CD8-positive, alpha-beta T cell (primary cell): ENCODE measurements at regions of chr2 and their contacts with region 1.

Region 1: GRCh38 chr2:63841254-63842022 is at the start of gene UGP2:
- DNase-seq: peak; percentile 68 to 92 (median 83)
- ATAC-seq: peak; percentile 68
- H3K4me3 ChIP-seq: peak within 1 kb of the TSS; percentile 94 to 98
- H3K4me3 Mint-ChIP-seq: peak within 1 kb of the TSS; percentile 99
- H3K27ac ChIP-seq: peak within 1 kb of the TSS; percentile 81 to 89
- H3K27ac Mint-ChIP-seq: peak within 1 kb of the TSS; percentile 98
- H3K4me1 ChIP-seq: peaks cover 41% of the 10 kb centered on the region
- H3K4me1 Mint-ChIP-seq: peaks cover 52% of the 10 kb centered on the region
- H3K27me3 ChIP-seq: no peaks in the 10 kb centered on the region
- H3K27me3 Mint-ChIP-seq: no peaks in the 10 kb centered on the region
- CTCF ChIP-seq: peak; percentile 24
- total RNA-seq, gene UGP2: 43.9 to 48.2 TPM

Region 2: DNA sequence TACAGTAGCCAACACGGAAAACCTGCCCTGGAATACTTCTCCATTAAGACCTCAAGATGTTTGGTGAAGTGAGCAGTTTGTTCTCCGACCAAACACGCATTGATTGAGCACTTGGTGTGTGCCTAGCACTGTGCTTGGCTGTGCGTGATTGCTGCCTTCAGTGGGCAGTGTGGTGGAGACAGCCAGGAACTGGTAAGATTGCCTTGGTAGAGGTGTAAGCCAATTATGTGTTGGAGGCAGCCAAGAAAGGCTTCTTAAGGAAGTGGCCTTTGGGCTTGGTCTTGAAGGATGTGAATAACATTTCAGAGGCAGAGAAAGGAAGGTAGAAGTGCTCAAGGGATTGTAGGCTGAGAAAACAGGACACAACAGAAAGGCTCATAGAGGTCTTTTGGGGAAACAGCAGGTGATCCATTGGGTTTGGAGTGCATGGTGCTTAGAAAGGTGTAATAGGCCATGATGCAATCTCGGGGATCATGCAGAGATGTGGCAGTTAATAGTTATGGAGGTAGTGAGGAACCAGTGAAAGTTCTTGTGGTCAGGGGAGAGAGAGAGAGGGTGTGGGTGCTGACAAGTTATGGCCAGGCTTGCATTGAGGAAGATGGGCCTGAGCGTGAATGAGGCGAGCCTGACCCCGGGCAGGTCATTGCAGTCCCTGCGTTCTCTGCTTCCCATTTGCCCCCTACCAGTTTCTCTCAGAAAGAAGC is 1639.3 kb before region 1 on chr2:
- CTCF ChIA-PET with region 1: no interaction called
- POLR2A ChIA-PET with region 1: no interaction called
- intact Hi-C with region 1: loop called (anchors 5 to 10 kb)
- DNase-seq: peak in 1 of 9 experiments; percentile 47
- ATAC-seq: no peak
- H3K4me3 ChIP-seq: no peak overlapping the region
- H3K4me3 Mint-ChIP-seq: peak overlapping the region; percentile 42
- H3K27ac ChIP-seq: peak overlapping the region in 1 of 2 experiments; percentile 50
- H3K27ac Mint-ChIP-seq: peak overlapping the region; percentile 55
- H3K4me1 ChIP-seq: peaks cover 89% of the 10 kb centered on the region
- H3K4me1 Mint-ChIP-seq: peaks cover 98% of the 10 kb centered on the region
- H3K27me3 ChIP-seq: no peaks in the 10 kb centered on the region
- H3K27me3 Mint-ChIP-seq: no peaks in the 10 kb centered on the region
- CTCF ChIP-seq: no peak

Region 3: DNA sequence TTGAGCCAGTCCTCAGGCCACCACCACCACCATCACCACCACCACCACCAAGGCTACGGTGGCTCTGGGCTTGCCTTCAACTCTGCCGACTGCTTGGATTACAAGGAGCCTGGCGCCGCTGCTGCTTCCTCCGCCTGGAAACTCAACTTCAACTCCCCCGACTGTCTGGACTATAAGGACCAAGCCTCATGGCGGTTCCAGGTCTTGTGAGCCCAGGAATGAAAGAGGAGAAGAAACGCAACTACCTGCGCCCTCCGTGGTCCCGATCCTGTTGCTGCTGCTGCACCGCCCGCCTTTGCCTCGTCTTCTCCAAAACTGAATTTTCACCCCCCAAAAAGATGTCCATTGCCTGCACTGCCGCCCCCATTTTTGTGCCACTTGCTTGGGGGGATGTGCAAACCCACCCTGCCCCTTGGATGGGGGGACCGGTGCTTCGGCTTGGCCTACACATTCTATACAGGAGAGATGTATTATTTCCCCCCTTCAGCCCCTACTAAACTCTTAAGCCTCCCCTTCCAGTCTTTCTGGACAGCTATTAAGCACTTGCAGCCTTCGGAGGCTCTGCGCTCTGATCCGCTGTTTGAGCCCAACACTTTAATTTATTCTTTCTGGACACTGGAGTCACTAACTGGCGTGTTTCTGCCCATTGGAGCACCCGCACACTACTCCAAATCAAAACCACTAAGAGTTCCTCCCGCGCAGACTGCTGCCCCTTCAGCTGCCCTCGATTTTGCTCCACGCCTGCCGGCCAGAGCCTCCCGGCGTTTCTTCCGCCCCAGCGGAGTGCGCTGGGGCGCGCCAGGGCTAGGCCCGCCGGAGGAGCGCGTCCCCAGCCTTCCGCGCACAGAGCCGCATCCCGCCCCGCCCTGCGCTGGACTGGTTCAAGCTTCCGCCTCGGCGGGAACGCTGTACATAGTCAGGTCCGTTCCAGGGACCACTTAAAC is 785.1 kb before region 1 on chr2:
- CTCF ChIA-PET with region 1: no interaction called
- POLR2A ChIA-PET with region 1: no interaction called
- intact Hi-C with region 1: loop called in 1 of 2 experiments (anchors 5 kb)
- DNase-seq: peak in 2 of 9 experiments; percentile 3 to 11
- ATAC-seq: no peak
- H3K4me3 ChIP-seq: no peak overlapping the region
- H3K4me3 Mint-ChIP-seq: peak overlapping the region; percentile 2
- H3K27ac ChIP-seq: no peak overlapping the region
- H3K27ac Mint-ChIP-seq: peak overlapping the region; percentile 21
- H3K4me1 ChIP-seq: peaks cover 62% of the 10 kb centered on the region
- H3K4me1 Mint-ChIP-seq: peaks cover 66% of the 10 kb centered on the region
- H3K27me3 ChIP-seq: peaks cover 66 to 69% of the 10 kb centered on the region in 2 experiments
- H3K27me3 Mint-ChIP-seq: peaks cover 72% of the 10 kb centered on the region
- CTCF ChIP-seq: no peak

Region 4: GRCh38 chr2:63861220-63861822 is 19.9 kb after region 1 on chr2:
- CTCF ChIA-PET with region 1: interaction called, 29 read pairs
- POLR2A ChIA-PET with region 1: interaction called, 47 read pairs
- intact Hi-C with region 1: loop called in 1 of 2 experiments (anchors 1 kb)
- DNase-seq: peak; percentile 29 to 83 (median 66)
- ATAC-seq: peak; percentile 61
- H3K4me3 ChIP-seq: no peak overlapping the region
- H3K4me3 Mint-ChIP-seq: no peak overlapping the region
- H3K27ac ChIP-seq: no peak overlapping the region
- H3K27ac Mint-ChIP-seq: peak overlapping the region; percentile 12
- H3K4me1 ChIP-seq: peaks cover 21% of the 10 kb centered on the region
- H3K4me1 Mint-ChIP-seq: peaks cover 32% of the 10 kb centered on the region
- H3K27me3 ChIP-seq: no peaks in the 10 kb centered on the region
- H3K27me3 Mint-ChIP-seq: no peaks in the 10 kb centered on the region
- CTCF ChIP-seq: peak; percentile 71

Region 5: DNA sequence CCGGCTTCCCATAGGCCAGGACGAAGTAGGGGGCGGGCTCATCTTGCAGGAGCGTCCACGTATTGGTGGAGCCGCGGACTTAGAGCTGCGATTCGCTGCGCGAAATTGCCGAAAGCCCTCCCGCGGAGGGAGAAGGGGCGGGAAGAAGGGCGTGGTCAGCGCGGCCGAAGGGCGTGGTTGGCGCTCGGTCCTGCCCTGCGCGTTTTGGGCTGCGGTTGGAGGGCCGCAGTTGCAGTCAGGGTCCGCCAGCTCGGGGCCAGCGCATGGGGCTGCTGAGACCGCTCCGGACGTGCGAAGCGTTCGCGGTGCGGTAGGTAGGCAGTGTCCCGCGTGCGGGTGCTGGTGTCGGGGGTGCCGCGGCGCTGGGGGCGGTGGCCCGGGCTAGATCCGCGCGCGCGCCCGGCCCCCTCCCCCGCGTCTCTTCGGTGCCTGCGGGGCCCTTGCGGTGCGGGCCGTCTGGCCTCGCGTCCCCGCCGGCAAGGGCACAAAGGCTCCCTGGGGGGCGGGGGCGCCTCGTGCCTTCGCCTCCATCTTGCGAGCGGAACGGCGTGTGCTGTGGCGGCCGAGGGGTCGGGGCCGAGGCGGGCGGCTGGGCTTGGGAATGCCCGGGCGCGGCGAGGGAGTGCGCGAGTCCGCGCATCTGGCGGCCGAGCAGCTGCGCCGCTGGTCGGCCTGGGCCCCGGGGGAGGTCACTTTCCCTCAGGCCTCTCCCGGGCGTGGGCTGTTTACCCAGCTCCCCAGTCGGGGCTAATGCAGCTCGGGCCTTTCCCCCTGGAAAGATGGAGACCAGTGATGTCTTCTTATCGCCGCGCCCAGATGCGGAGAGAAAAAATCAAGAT is 1215.0 kb after region 1 on chr2 and contains the start of gene CEP68:
- CTCF ChIA-PET with region 1: no interaction called
- POLR2A ChIA-PET with region 1: no interaction called
- intact Hi-C with region 1: loop called in 1 of 2 experiments (anchors 10 kb)
- DNase-seq: peak; percentile 89 to 98 (median 96)
- ATAC-seq: peak; percentile 89
- H3K4me3 ChIP-seq: peak within 1 kb of the TSS; percentile 85 to 86
- H3K4me3 Mint-ChIP-seq: peak within 1 kb of the TSS; percentile 99
- H3K27ac ChIP-seq: peak within 1 kb of the TSS; percentile 62 to 72
- H3K27ac Mint-ChIP-seq: peak within 1 kb of the TSS; percentile 97
- H3K4me1 ChIP-seq: peaks cover 70% of the 10 kb centered on the region
- H3K4me1 Mint-ChIP-seq: peaks cover 73% of the 10 kb centered on the region
- H3K27me3 ChIP-seq: no peaks in the 10 kb centered on the region
- H3K27me3 Mint-ChIP-seq: no peaks in the 10 kb centered on the region
- CTCF ChIP-seq: no peak
- total RNA-seq, gene CEP68: 19.9 to 20.5 TPM

Region 6: GRCh38 chr2:65432227-65433190 is 1591.1 kb after region 1 on chr2 and contains the start of gene SPRED2:
- CTCF ChIA-PET with region 1: no interaction called
- POLR2A ChIA-PET with region 1: no interaction called
- intact Hi-C with region 1: loop called (anchors 10 kb)
- DNase-seq: peak in 8 of 9 experiments; percentile 37 to 88 (median 64)
- ATAC-seq: peak; percentile 34
- H3K4me3 ChIP-seq: peak within 1 kb of the TSS; percentile 81 to 91
- H3K4me3 Mint-ChIP-seq: peak within 1 kb of the TSS; percentile 88
- H3K27ac ChIP-seq: peak within 1 kb of the TSS in 1 of 2 experiments; percentile 31
- H3K27ac Mint-ChIP-seq: peak within 1 kb of the TSS; percentile 29
- H3K4me1 ChIP-seq: peaks cover 32% of the 10 kb centered on the region
- H3K4me1 Mint-ChIP-seq: peaks cover 22% of the 10 kb centered on the region
- H3K27me3 ChIP-seq: peaks cover 18 to 31% of the 10 kb centered on the region in 2 experiments
- H3K27me3 Mint-ChIP-seq: peaks cover 38% of the 10 kb centered on the region
- CTCF ChIP-seq: no peak
- total RNA-seq, gene SPRED2: 2.3 to 2.5 TPM